Activated T-helper 1 cell treated with anti-CD3 and anti-CD28 coated beads, Interleukin-12 subunit alpha, Interleukin-12 subunit beta, Interleukin-2, Interleukin-4 antibody, amounts not matched to agents 30 ng/mL and 10 ng/mL and 1 ng/mL, durations not matched to agents 14 hours and 24 hours and 36 hours (primary cell): ENCODE measurements at regions of chr10 and their contacts with region 1.

Region 1: DNA sequence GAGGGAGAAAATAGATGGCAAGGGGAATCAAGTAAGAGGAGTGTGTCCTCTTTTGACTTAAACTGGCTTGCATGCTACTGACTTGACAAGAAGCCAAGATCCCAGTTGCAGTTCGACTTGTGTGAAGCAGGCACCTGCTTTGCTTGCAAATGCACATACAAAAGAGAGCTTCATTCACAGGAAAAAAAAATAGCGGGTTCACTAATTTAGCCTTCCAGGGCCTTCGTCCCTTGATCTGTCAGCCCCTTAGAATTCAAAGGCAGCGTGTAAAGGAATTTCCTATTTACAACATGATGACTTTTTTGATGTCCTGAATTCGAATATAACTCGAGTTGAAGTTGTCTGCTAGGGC is 192.1 kb downstream of the CELF2 start:
- DNase-seq: no peak
- H3K4me3 Mint-ChIP-seq: peak overlapping the region; percentile 76
- H3K27ac Mint-ChIP-seq: peak overlapping the region; percentile 96
- H3K4me1 Mint-ChIP-seq: peaks cover 98% of the 10 kb centered on the region
- H3K27me3 Mint-ChIP-seq: peaks cover 1% of the 10 kb centered on the region

Region 2: GRCh38 chr10:11194859-11195586 is 14.8 kb before region 1 on chr10:
- intact Hi-C with region 1: loop called (anchors 2 kb)
- DNase-seq: no peak
- H3K4me3 Mint-ChIP-seq: no peak overlapping the region
- H3K27ac Mint-ChIP-seq: peak overlapping the region; percentile 43
- H3K4me1 Mint-ChIP-seq: peaks cover 83% of the 10 kb centered on the region
- H3K27me3 Mint-ChIP-seq: no peaks in the 10 kb centered on the region

Region 3: DNA sequence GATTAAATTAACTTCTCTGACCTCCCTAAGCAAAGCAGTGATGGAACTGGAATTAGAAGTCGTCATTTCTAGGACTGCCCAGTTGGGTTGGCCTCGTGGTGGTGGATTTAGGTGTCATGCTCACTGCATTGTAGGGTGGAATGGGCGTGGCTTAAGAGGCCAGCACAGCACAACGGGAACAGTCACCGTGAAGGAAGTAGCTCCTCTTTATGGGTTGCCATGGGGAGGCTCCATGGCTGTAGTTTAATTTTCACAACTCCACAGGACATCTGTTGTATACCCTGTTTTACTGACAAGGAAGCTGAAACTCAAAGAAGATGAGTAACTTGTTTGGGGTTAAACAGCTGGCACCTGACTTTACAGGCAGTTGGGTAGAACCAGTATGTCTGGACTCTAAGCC is 16.1 kb after region 1 on chr10:
- intact Hi-C with region 1: loop called (anchors 1 kb)
- DNase-seq: peak; percentile 48
- H3K4me3 Mint-ChIP-seq: peak overlapping the region; percentile 47
- H3K27ac Mint-ChIP-seq: peak overlapping the region; percentile 91
- H3K4me1 Mint-ChIP-seq: peaks cover 94% of the 10 kb centered on the region
- H3K27me3 Mint-ChIP-seq: no peaks in the 10 kb centered on the region